Activated B cell treated with CpG ODN at 0.5 μM for 24 hours (primary cell): ENCODE measurements at regions of chr1 and their contacts with region 1.

Region 1: GRCh38 chr1:89945852-89946476 is 48.9 kb upstream of the ZNF326 start:
- DNase-seq: no peak
- ATAC-seq: no peak
- H3K4me3 Mint-ChIP-seq: no peak overlapping the region
- H3K27ac Mint-ChIP-seq: no peak overlapping the region
- H3K4me1 Mint-ChIP-seq: peaks cover 3% of the 10 kb centered on the region
- H3K27me3 Mint-ChIP-seq: no peaks in the 10 kb centered on the region
- CTCF ChIP-seq: no peak

Region 2: DNA sequence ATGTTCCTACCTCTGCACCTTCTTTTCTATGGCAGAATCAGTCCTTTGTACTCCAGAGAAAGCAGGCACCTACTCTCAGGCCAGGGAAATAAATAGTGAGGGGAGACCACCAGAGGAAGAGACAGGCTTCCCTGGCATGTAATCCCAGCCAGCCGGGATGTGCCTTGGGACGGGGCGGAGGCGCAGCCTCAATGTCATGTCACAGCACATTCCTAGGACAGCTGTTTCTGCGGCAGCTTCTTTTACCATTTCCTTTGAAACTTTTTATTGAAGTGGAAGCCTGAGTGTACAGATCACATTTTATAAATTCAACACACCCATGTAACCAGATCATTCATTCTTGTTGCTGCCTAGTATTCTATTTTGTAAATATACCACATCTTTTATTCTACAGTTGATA is 18.9 kb before region 1 on chr1:
- CTCF ChIA-PET with region 1: no interaction called
- POLR2A ChIA-PET with region 1: no interaction called
- intact Hi-C with region 1: loop called (anchors 2 kb)
- DNase-seq: no peak
- ATAC-seq: no peak
- H3K4me3 Mint-ChIP-seq: no peak overlapping the region
- H3K27ac Mint-ChIP-seq: no peak overlapping the region
- H3K4me1 Mint-ChIP-seq: peaks cover 29% of the 10 kb centered on the region
- H3K27me3 Mint-ChIP-seq: no peaks in the 10 kb centered on the region
- CTCF ChIP-seq: no peak

Region 3: GRCh38 chr1:90729504-90730242 is 783.7 kb after region 1 on chr1:
- CTCF ChIA-PET with region 1: no interaction called
- POLR2A ChIA-PET with region 1: no interaction called
- intact Hi-C with region 1: no loop called
- DNase-seq: no peak
- ATAC-seq: no peak
- H3K4me3 Mint-ChIP-seq: peak overlapping the region; percentile 41
- H3K27ac Mint-ChIP-seq: no peak overlapping the region
- H3K4me1 Mint-ChIP-seq: peaks cover 39% of the 10 kb centered on the region
- H3K27me3 Mint-ChIP-seq: peaks cover 73% of the 10 kb centered on the region
- CTCF ChIP-seq: no peak